ENCODE measurements at regions of chr5 and their contacts with region 1.

Region 1: DNA sequence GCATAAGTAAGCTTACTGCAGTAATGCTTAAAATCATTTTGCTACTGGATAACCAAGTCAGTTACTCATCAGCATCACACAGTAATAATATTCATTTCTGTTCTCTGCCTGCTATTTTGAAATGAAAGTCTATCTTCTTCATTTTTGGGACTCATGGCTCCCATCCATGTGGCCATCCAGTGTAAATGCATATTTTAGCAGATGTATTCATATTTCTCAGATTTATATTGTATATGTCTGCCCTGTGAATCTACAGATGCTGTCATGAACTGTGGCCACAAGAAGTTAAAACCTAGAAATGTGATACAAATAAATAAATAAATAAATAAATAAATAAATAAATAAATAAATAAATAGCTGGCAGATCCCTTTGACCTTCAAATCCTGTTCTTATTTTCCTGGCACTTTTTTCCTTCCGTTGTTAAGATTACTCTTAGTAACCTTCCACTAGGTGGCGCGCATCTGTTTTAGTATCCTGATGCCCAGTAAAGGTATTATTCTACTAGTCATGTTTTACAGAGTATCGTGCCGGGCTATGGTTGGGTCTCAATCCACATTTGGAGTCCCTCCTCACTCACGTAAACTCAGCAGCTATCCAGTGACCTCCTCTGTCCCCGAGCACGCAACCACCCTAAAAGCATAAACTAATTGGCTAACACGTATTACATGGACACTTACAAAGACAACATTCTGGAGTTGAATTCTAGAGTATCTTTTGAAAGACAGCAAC is 79.2 kb upstream of the IL7R start:
- DNase-seq: peak; percentile 84
- ATAC-seq: peak; percentile 74
- H3K4me3 ChIP-seq: no peak overlapping the region
- H3K27ac ChIP-seq: no peak overlapping the region
- H3K4me1 ChIP-seq: peaks cover 20% of the 10 kb centered on the region
- H3K27me3 ChIP-seq: no peaks in the 10 kb centered on the region
- CTCF ChIP-seq: peak; percentile 70

Region 2: DNA sequence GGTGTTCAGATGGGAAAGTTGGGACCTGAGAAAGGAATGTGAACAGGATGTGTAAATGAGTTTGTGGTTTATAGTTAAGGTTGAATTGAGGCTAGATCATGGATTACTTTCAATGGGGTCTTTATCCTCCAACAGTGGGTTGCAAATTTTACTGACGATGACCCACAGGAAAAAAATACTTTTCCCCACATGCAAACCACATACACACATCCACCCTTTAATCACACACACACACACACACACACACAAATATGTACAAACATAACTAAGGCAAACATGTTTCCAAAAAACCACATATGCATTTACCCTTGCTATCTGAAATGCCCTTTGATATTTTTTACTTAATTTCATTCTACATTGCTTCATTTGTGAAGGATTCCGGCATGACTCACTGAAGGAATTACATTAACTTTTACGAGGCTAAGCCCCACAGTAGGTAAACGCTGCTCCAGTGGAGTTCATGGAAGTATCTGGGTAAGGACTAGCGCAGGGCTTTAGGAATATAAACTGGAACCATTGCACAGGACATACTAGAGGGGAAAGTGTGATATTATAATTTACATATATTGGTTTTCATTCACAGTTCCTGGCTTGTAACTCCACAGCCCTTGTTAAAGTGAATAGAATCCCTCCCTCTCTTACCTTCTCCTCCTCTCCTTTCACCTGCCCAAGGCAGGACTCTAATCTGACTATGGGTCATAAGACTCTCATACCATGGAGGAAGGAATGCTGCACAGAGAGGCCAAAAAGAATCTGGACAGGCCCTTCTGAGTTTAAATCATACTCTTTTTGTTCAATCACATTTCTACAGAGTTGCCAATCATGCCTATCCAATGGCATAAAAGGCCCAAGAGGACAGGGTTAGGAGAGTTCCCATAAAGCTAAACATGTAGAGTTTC is 168.4 kb before region 1 on chr5:
- CTCF ChIA-PET with region 1: no interaction called
- POLR2A ChIA-PET with region 1: no interaction called
- intact Hi-C with region 1: loop called (anchors 2 kb)
- DNase-seq: peak; percentile 90
- ATAC-seq: peak; percentile 99
- H3K4me3 ChIP-seq: peak overlapping the region; percentile 13; the same call in 1 of the 2 replicates
- H3K27ac ChIP-seq: peak overlapping the region; percentile 67
- H3K4me1 ChIP-seq: peaks cover 19% of the 10 kb centered on the region
- H3K27me3 ChIP-seq: no peaks in the 10 kb centered on the region
- CTCF ChIP-seq: no peak

Region 3: DNA sequence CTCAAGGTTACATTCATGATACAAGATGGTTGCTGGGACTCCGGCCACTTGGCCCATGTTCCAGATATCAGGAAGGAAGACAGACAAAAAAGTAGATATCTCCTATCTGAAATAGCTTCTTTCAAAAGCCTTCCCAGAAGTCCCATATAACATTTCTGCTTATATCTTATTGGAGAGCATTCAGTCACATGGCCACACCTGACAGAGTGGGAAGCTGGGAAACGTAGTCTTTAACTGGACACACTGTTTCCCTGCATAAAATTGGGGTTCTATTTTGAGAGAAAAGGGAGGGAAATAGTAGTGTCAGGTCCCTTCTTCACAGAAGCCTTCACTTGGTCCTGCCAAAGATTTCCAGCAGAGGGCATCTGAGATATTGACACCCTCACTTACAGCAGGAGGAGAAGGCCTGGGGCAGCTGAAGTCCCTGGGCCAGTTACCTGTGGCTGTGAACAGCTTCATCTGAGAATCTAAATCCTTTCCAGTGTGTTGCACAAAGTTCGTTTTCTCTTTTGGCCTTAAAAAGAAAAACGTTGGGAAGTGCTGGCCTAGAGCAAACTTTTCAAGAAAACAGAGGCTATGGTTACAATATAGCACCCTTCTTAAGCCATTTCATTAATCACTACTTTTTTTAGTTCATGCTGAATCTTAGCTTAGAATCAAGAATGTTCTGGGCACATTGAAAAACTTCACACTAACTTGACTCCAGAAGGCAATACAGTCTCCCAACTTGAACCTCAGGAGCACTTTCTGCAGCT is 126.3 kb before region 1 on chr5:
- CTCF ChIA-PET with region 1: no interaction called
- POLR2A ChIA-PET with region 1: no interaction called
- intact Hi-C with region 1: loop called (anchors 1 kb)
- DNase-seq: peak; percentile 82
- ATAC-seq: peak; percentile 99
- H3K4me3 ChIP-seq: no peak overlapping the region
- H3K27ac ChIP-seq: no peak overlapping the region
- H3K4me1 ChIP-seq: no peaks in the 10 kb centered on the region
- H3K27me3 ChIP-seq: no peaks in the 10 kb centered on the region
- CTCF ChIP-seq: peak; percentile 88

Region 4: DNA sequence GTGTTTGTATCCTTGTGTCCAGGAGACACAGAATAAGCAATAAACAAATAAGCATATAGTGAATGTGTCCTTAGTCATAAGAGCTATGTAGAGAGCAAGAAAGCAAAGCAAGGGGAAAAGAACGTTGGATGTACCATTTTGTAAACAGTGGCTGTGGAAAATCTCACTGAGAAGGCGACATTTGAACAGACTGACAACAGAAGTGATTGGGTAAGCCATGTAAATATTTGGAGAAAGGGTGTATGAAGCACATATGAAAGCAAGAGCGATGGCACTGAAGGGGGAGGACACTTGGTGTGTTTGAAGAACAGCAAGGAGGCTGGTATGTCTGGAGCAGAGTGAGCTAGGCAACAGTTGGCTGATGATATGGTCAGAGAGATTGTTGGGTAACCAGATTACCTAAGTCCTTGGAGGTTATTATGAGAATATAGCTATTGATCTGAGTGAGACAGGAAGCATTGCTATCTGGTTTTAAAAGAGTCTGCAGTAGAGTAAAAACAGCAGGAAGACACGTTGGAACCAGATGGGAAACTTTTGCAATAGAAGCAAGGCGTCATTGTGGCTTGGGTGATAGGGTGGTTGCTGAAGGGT is 36.3 kb before region 1 on chr5:
- CTCF ChIA-PET with region 1: no interaction called
- POLR2A ChIA-PET with region 1: no interaction called
- intact Hi-C with region 1: loop called (anchors 2 kb)
- DNase-seq: peak; percentile 65
- ATAC-seq: peak; percentile 62
- H3K4me3 ChIP-seq: peak overlapping the region; percentile 7; the same call in 1 of the 2 replicates
- H3K27ac ChIP-seq: peak overlapping the region; percentile 90
- H3K4me1 ChIP-seq: peaks cover 23% of the 10 kb centered on the region
- H3K27me3 ChIP-seq: no peaks in the 10 kb centered on the region
- CTCF ChIP-seq: no peak

Region 5: DNA sequence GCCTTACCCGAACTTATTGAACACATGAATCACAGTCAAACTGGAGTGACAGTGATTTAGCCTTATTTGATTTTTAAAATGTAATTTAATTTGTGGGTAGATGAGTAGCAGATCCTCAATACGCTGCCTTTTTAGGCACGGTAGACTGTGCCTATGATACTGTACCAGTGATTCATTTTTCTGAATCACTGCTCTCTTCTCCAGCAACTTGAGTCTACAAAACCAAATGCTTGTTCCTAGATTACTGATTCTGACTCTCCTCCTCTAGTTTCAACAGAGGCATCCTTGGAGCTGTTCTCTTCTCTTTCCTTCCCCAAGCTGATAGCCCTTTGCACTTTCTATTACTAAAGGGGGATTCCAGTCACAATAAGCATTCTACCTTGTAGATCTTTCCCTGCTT is 15.2 kb before region 1 on chr5:
- CTCF ChIA-PET with region 1: no interaction called
- POLR2A ChIA-PET with region 1: no interaction called
- intact Hi-C with region 1: no loop called
- DNase-seq: no peak
- ATAC-seq: no peak
- H3K4me3 ChIP-seq: no peak overlapping the region
- H3K27ac ChIP-seq: no peak overlapping the region
- H3K4me1 ChIP-seq: no peaks in the 10 kb centered on the region
- H3K27me3 ChIP-seq: no peaks in the 10 kb centered on the region
- CTCF ChIP-seq: no peak

Region 6: DNA sequence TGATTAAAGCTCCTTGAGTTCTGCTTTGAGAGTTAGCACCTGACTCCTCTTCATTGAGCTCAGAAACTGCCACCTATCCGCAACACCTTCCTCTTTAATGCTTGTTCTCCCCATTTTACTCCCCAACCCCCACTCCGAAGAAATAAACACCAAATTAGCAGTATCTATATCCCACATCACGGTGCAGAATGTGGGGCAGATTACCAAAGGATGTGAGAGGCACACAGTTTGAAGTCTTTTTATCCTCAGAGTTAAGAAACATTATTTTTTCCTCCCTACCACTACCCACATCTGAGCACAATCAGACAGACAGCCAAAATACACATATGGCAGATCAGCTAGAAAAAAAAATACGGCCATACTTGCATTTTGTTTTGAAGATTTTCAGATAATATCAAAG is 53.1 kb after region 1 on chr5:
- CTCF ChIA-PET with region 1: interaction called, 13 read pairs
- POLR2A ChIA-PET with region 1: no interaction called
- intact Hi-C with region 1: no loop called
- DNase-seq: no peak
- ATAC-seq: no peak
- H3K4me3 ChIP-seq: no peak overlapping the region
- H3K27ac ChIP-seq: no peak overlapping the region
- H3K4me1 ChIP-seq: no peaks in the 10 kb centered on the region
- H3K27me3 ChIP-seq: no peaks in the 10 kb centered on the region
- CTCF ChIP-seq: no peak

Region 7: DNA sequence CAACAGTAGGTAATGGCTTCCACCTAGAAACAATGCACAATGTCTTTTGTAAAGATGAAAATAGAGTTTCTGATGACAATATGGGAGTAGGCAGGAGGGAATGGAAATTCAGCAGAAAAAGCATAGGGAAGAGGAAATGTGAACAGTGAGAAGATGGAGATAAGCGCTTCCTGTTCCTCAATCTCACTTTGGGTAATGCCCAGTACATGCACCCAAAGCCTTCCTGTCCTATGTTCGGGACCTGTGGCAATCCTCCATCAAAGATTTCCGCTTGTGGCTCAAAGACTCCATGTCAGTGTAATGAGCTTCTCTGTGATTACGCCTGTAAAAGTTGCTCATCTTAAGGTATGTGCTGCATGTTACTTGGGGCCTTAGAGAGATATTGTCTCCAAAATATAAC is 211.0 kb after region 1 on chr5:
- CTCF ChIA-PET with region 1: no interaction called
- POLR2A ChIA-PET with region 1: no interaction called
- intact Hi-C with region 1: no loop called
- DNase-seq: no peak
- ATAC-seq: no peak
- H3K4me3 ChIP-seq: no peak overlapping the region
- H3K27ac ChIP-seq: no peak overlapping the region
- H3K4me1 ChIP-seq: no peaks in the 10 kb centered on the region
- H3K27me3 ChIP-seq: peaks cover 81% of the 10 kb centered on the region
- CTCF ChIP-seq: no peak

Measured in PC-3 (cell line).